CD8-positive, alpha-beta memory T cell (primary cell): ENCODE measurements at regions of chr10 and their contacts with region 1.

Region 1: GRCh38 chr10:26739071-26739631 is 41.6 kb downstream of the PDSS1 start:
- DNase-seq: no peak
- H3K4me3 ChIP-seq: no peak overlapping the region
- H3K4me3 Mint-ChIP-seq: no peak overlapping the region
- H3K27ac ChIP-seq: no peak overlapping the region
- H3K27ac Mint-ChIP-seq: peak overlapping the region; percentile 8 to 91 (median 52)
- H3K4me1 ChIP-seq: no peaks in the 10 kb centered on the region
- H3K4me1 Mint-ChIP-seq: peaks cover 3 to 22% (median 20%) of the 10 kb centered on the region in 3 donors
- H3K27me3 ChIP-seq: no peaks in the 10 kb centered on the region
- H3K27me3 Mint-ChIP-seq: peaks cover 0 to 2% of the 10 kb centered on the region in 2 donors

Region 2: DNA sequence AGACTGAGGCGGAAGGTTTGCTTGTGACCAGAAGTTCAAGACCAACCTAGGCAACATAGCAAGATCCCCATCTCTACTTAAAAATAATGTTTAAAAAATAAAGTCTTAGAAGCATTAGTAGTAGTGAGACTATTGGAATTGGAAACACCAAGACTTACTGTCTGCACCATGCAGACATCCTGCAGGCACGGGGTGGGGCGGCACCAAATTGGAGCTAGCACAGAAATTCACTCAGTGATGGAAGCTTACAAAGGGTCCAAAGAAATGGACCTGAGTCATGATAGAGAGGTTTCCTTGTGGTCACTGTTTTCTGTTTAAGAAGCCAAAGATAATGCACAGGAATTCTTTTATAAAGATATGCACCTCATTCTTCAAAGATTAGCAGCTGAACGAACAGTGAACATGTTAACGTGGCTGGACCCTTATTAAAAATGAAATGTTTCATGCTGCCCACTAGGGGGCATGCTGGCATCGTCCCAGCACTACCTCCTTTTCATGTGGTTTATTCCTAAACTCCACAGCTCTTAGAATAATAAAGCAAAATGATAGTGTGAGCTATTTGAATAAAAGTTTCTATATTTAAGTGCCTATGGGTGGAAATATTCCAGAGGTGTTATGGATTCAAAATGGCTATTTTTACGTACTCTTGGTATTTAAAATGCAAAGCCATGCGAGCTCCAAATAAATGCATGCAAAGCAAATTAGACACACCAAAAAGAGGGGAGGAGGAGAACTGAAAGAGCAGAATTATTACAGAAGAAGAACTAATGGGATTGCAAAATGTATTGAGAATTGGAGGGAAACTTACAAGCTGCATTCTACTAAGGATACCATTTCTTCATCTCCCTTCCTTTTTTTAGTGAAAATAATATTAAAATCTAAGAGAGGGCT is 13.1 kb before region 1 on chr10:
- CTCF ChIA-PET with region 1: interaction called, 19 read pairs
- POLR2A ChIA-PET with region 1: interaction called, 3 read pairs
- DNase-seq: peak; percentile 21 to 57 (median 38)
- H3K4me3 ChIP-seq: no peak overlapping the region
- H3K4me3 Mint-ChIP-seq: no peak overlapping the region
- H3K27ac ChIP-seq: no peak overlapping the region
- H3K27ac Mint-ChIP-seq: peak overlapping the region in 4 of 8 donors; percentile 12 to 66 (median 55)
- H3K4me1 ChIP-seq: peaks cover 10% of the 10 kb centered on the region
- H3K4me1 Mint-ChIP-seq: peaks cover 12 to 17% (median 16%) of the 10 kb centered on the region in 3 donors
- H3K27me3 ChIP-seq: no peaks in the 10 kb centered on the region
- H3K27me3 Mint-ChIP-seq: no peaks in the 10 kb centered on the region

Region 3: GRCh38 chr10:26776258-26776657 is 37.1 kb after region 1 on chr10:
- CTCF ChIA-PET with region 1: no interaction called
- POLR2A ChIA-PET with region 1: no interaction called
- DNase-seq: no peak
- H3K4me3 ChIP-seq: no peak overlapping the region
- H3K4me3 Mint-ChIP-seq: no peak overlapping the region
- H3K27ac ChIP-seq: no peak overlapping the region
- H3K27ac Mint-ChIP-seq: peak overlapping the region in 2 of 8 donors; percentile 48 to 90
- H3K4me1 ChIP-seq: peaks cover 21% of the 10 kb centered on the region
- H3K4me1 Mint-ChIP-seq: peaks cover 77 to 97% (median 95%) of the 10 kb centered on the region in 3 donors
- H3K27me3 ChIP-seq: no peaks in the 10 kb centered on the region
- H3K27me3 Mint-ChIP-seq: no peaks in the 10 kb centered on the region

Region 4: DNA sequence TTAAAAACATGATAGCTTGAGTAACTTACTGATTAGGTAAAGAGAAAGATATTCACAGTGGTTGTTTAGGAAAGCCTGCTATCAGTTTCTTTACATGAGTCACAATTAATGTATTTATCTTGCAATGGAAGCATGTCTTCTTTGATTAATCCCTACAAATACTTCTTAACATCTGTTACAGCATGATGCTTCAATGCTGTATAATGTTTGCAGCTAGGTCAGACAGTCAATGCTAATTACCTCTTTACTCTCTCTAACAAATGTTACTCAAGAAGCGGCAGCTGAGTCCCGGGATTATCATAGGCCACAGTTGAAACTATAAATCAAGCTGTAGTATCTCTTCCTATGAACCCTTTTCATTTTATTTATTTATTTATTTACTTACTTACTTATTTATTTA is 468.2 kb after region 1 on chr10:
- CTCF ChIA-PET with region 1: no interaction called
- POLR2A ChIA-PET with region 1: no interaction called
- DNase-seq: no peak
- H3K4me3 ChIP-seq: no peak overlapping the region
- H3K4me3 Mint-ChIP-seq: no peak overlapping the region
- H3K27ac ChIP-seq: no peak overlapping the region
- H3K27ac Mint-ChIP-seq: no peak overlapping the region
- H3K4me1 ChIP-seq: no peaks in the 10 kb centered on the region
- H3K4me1 Mint-ChIP-seq: peaks cover 0 to 2% (median 0%) of the 10 kb centered on the region in 3 donors
- H3K27me3 ChIP-seq: no peaks in the 10 kb centered on the region
- H3K27me3 Mint-ChIP-seq: no peaks in the 10 kb centered on the region